Lower leg skin (tissue), 4 donors: ENCODE measurements at regions of chr19 and their contacts with region 1.

Region 1: DNA sequence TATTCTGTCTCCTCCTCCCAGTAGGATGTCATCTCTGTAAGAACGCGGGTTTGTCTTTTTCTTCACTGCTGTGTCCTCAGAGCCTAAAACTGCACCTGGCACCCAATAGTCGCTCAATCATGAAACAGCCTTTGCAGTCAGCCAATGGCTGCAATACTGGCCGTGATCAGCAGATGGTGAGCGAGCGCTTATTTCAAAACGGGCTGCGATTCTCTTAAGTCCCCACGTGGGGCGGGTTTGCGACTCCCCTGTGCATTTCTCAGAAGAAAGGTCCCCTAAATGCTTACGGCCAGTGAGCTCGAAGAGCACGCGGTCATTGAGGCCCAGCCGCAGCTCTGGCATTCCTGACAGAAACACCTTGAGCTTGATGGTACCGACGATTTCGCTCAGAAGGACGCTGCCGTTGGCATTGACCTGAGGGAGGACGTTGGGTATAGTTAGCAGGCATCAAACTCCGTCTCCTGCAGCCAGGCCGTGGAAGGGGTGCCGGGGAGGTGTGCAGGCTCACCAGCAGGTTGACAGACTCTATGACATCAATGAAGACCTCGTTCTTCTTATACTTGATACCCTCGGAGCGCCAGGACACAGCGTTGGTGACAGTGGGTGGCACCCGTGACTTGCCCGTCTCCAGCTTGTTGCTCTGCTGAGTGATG is 6.0 kb downstream of the AP1M2 start:
- DNase-seq: peak; percentile 89 to 97
- H3K4me3 ChIP-seq: no peak overlapping the region
- CTCF ChIP-seq: peak in 2 of 3 donors; percentile 90 to 98
- POLR2A ChIP-seq: no peak

Region 2: GRCh38 chr19:9584073-9584833 is 996.9 kb before region 1 on chr19 and contains the start of gene ZNF121:
- intact Hi-C with region 1: no loop called
- DNase-seq: peak; percentile 75 to 96
- H3K4me3 ChIP-seq: peak within 1 kb of the TSS; percentile 85
- CTCF ChIP-seq: no peak
- POLR2A ChIP-seq: no peak
- total RNA-seq, gene ZNF121: 28.1 to 44.6 (median 31.2) TPM

Region 3: GRCh38 chr19:10644260-10645007 is 63.3 kb after region 1 on chr19:
- intact Hi-C with region 1: loop called (anchors 2 kb)
- DNase-seq: peak; percentile 75 to 96
- H3K4me3 ChIP-seq: no peak overlapping the region
- CTCF ChIP-seq: peak in 1 of 3 donors; percentile 67
- POLR2A ChIP-seq: no peak

Region 4: DNA sequence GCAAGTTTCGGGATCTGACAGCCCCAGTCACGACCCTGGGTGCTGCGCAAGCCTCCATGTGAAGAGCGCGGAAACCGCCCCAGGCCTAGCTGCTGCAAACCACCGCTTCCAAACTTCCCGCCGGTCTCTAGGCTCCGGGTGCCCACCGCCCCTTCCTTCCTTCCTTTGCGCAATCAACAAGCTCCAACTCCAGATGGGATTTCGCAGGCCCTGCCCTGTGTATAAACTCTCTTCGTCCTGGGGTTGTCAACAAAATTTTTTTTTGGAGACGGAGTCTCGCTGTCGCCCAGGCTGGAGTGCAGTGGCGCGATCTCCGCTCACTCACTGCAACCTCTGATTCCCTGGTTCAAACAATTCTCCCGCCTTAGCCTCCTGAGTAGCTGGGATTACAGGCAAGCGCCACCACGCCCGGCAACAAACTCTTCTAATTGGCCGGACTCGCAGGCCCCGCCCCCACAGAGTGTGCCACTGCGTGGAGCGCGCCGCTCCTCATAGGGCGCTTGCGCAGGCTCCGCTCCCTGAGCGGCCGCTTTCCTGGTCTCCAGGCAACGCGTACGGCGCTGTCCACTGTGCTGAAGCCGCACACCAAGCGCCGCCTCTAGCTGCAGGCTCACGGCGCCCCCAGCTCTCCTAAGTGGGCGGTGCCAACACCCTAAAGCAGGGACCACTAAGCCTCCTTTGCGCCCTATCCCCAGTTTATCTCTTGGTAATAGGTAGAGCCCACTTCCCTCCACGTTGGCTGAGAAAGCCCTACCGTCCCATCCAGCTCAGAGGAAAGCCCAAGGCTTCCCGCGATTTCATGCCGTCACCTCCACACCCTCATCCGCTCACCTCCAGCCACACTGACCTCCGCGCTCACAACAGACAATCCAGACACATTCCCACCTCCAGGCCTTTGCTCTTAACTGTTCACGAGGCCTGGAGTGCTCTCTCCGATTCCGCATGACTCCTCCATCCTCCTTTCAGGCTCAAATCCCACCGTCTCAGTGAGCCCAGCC is 114.6 kb after region 1 on chr19:
- intact Hi-C with region 1: loop called (anchors 5 kb)
- DNase-seq: peak; percentile 89 to 97
- H3K4me3 ChIP-seq: no peak overlapping the region
- CTCF ChIP-seq: no peak
- POLR2A ChIP-seq: no peak